Posterior vena cava (tissue), 2 donors: ENCODE measurements at regions of chr20 and their contacts with region 1.

Region 1: DNA sequence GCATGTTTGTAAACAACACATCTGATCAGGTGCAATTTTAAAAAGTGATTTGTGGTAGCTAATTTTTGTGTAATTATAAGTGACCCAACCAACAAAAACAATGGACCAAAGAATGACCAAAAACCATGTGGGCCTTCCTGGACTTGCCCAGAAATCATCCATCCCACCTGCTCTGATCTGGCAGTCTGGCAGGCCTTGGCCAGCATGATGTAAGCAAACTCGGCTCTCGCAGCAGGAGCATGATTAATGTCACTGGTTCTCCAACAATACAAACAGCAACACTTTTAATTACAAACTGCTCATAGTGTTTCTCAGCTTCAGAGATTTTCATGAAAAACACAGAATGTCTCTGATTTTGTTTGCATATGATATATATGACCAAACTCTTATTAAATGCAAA is 16.1 kb downstream of the TP53INP2 start:
- DNase-seq: no peak

Region 2: DNA sequence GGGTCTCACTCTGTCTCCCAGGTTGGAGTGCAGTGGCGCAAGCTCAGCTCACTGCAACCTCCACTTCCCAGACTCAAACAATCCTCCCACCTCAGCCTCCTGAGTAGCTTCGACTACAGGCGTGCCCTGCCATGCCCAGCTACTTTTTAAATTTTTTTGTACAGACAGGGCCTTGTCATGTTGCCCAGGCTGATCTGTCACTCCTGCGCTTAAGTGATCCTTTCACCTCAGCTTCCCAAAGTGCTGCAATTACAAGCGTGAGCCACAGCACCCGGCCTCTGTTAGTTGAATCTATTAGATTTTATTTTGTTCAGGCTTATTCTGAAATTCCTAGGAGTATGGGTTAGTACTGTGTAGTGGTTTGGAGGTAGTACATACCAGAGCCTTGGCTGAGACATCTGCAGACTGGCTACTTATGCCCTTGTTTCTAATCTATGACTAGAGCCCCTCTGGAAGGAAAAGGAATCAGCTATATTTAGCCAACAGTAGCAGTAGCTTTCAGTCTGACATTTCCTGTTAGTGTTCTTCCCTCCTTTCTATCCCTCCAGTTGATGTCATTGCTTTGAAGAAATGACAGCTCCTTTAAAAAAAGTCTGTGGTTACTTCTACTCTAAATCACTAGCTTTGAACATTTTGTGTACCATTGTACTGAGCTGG is 282.8 kb before region 1 on chr20:
- intact Hi-C with region 1: no loop called
- DNase-seq: no peak

Region 3: GRCh38 chr20:34676642-34677373 is 43.5 kb before region 1 on chr20 and contains the start of gene PIGU:
- intact Hi-C with region 1: loop called in 1 of 2 experiments (anchors 1 kb)
- DNase-seq: peak; percentile 99
- total RNA-seq, gene PIGU: 9.6 to 10.7 TPM

Region 4: DNA sequence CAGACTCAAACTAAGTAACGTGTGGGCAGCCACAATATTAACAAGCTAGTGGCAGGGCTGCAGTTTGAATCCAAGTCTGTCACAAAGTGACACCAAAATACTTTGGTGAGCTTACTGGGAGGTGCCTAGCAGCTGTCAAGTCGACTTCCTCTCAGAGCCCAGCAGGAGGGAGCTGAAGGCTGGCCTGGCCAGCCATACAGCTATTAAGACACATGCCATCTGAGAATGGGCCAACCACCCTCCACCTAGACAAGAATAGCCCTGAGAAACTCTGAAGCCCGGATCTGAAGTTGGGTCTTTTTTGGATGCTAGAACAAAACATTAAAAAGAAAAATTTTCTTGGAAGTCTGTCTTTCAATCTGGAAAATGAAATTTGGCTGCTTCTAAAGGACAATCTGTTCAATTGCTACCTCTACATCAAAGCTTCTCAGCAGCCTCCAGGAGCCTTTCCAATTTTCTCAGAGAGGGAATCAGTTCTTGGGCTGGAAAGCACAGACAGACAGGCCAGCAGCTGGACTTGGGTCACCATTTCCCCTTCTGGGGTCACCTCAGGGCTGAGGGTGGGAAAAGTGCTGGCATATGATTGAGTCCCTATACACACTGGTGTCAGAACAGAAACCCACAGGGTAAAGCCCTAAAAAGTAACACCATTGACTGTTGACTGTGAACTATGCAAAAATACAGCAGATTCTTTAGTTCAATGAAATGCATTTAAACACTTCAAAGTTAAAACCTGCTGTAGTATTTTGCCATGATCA is 648.6 kb after region 1 on chr20:
- intact Hi-C with region 1: no loop called
- DNase-seq: no peak